ENCODE measurements at regions of chr1 and their contacts with region 1.

Region 1: GRCh38 chr1:115727706-115728249 is 40.7 kb downstream of the CASQ2 start:
- DNase-seq: peak in 1 of 2 donors; percentile 83
- ATAC-seq: peak; percentile 84
- H3K4me3 ChIP-seq: no peak overlapping the region
- H3K27ac ChIP-seq: peak overlapping the region in 1 of 2 donors; percentile 8
- H3K4me1 ChIP-seq: no peaks in the 10 kb centered on the region
- H3K27me3 ChIP-seq: no peaks in the 10 kb centered on the region

Region 2: GRCh38 chr1:115545791-115546733 is 181.7 kb before region 1 on chr1:
- intact Hi-C with region 1: no loop called
- DNase-seq: peak; percentile 54 to 75
- ATAC-seq: peak; percentile 53
- H3K4me3 ChIP-seq: no peak overlapping the region
- H3K27ac ChIP-seq: peak overlapping the region in 1 of 2 donors; percentile 43
- H3K4me1 ChIP-seq: no peaks in the 10 kb centered on the region
- H3K27me3 ChIP-seq: no peaks in the 10 kb centered on the region

Region 3: GRCh38 chr1:115764541-115764940 is 36.8 kb after region 1 on chr1:
- intact Hi-C with region 1: loop called in 1 of 2 experiments (anchors 5 kb)
- DNase-seq: no peak
- ATAC-seq: no peak
- H3K4me3 ChIP-seq: no peak overlapping the region
- H3K27ac ChIP-seq: no peak overlapping the region
- H3K4me1 ChIP-seq: no peaks in the 10 kb centered on the region
- H3K27me3 ChIP-seq: peaks cover 0 to under 1% of the 10 kb centered on the region in 2 donors

Region 4: GRCh38 chr1:115828101-115829022 is 100.6 kb after region 1 on chr1:
- intact Hi-C with region 1: no loop called
- DNase-seq: peak; percentile 46 to 74
- ATAC-seq: peak; percentile 52
- H3K4me3 ChIP-seq: peak overlapping the region; percentile 21 to 33
- H3K27ac ChIP-seq: no peak overlapping the region
- H3K4me1 ChIP-seq: no peaks in the 10 kb centered on the region
- H3K27me3 ChIP-seq: no peaks in the 10 kb centered on the region

Measured in aorta (tissue), 5 donors.